Dorsolateral prefrontal cortex (tissue), 120 donors: ENCODE measurements at regions of chr16 and their contacts with region 1.

Region 1: GRCh38 chr16:56300891-56301850 is 109.9 kb downstream of the GNAO1 start:
- DNase-seq: peak in 7 of 10 donors; percentile 68 to 84 (median 79)
- H3K4me3 ChIP-seq: peak overlapping the region in 1 of 59 donors; percentile 6
- H3K27ac ChIP-seq: peak overlapping the region; percentile 76 to 100 (median 98)
- H3K27me3 ChIP-seq: no peaks in the 10 kb centered on the region
- CTCF ChIP-seq: no peak

Region 2: DNA sequence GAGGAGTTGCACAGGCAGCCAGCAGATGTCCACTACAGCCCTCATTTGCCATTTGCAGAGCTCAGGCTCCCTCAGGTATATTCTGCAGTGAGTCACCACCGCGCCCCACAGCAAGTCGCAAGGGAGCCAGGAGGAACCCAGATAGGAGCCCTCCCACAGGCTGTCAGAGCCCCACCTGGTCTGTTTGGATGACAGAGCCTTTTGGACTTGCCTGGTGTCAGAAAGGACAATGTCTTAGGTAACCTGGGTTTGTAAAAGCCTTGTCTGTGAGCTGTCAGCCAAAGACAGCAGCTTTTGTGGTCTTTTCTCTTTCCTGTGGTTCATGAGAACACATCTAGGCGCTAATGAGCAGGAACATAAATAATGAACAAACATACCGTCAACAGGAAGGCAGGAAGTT is 39.0 kb before region 1 on chr16:
- intact Hi-C with region 1: loop called (anchors 5 kb)
- DNase-seq: no peak
- H3K4me3 ChIP-seq: no peak overlapping the region
- H3K27ac ChIP-seq: peak overlapping the region; percentile 80 to 100 (median 97)
- H3K27me3 ChIP-seq: no peaks in the 10 kb centered on the region
- CTCF ChIP-seq: no peak

Region 3: DNA sequence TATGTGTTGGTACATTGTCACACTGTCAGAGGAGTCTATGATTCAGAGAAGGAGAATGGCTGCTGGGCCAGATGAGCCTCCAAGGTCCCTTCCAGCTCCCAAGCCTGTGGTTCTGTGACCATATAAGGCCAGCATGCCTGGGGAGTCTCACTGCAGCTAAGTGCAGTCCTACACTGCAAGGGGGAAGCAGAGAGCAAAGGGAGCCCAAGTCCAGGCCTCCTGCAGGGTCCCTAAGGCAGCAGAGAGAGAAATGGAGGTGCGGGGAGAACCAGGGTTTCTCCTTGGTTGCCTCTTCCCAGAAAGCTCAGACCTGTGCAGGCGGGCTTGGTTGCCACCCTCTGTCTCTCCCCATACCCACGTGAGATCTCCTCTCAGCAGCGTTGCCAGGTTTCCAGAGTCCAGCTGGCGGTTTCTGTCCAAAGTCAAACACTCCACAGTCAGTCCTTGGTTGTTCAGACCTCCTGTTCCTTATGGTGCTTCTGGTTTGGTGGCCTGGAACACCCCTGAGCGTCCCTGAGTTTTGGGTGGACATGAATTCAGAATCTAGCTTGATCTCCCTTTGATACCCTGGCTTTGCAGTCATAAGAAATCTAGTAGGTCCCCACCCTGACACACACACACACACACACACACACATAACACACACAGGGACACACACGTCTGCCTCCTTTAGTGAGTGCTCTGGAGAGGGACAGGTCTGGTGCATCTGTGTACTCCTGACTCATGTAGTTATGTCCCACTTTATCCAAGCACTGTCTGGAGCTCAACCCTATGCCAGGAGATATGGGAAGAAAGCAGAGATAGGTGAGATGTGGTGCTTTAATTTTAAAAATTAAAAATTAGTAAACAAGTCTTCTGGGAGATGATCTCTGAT is 31.1 kb before region 1 on chr16:
- intact Hi-C with region 1: loop called in 1 of 2 experiments (anchors 5 kb)
- DNase-seq: peak in 6 of 10 donors; percentile 68 to 78 (median 72)
- H3K4me3 ChIP-seq: peak overlapping the region in 5 of 59 donors; percentile 5 to 22 (median 15)
- H3K27ac ChIP-seq: peak overlapping the region; percentile 72 to 100 (median 97)
- H3K27me3 ChIP-seq: no peaks in the 10 kb centered on the region
- CTCF ChIP-seq: peak in 43 of 56 donors; percentile 12 to 57 (median 40)